T-cell (primary cell): ENCODE measurements at regions of chr9 and their contacts with region 1.

Region 1: GRCh38 chr9:15370466-15371447 is 51.9 kb upstream of the SNAPC3 start:
- DNase-seq: no peak
- ATAC-seq: no peak
- H3K4me3 ChIP-seq: no peak overlapping the region
- H3K4me3 Mint-ChIP-seq: no peak overlapping the region
- H3K27ac ChIP-seq: no peak overlapping the region
- H3K27ac Mint-ChIP-seq: no peak overlapping the region
- H3K4me1 ChIP-seq: no peaks in the 10 kb centered on the region
- H3K4me1 Mint-ChIP-seq: no peaks in the 10 kb centered on the region
- H3K27me3 ChIP-seq: peaks cover 0 to 12% of the 10 kb centered on the region in 2 experiments
- H3K27me3 Mint-ChIP-seq: peaks cover 0 to 6% of the 10 kb centered on the region in 2 donors

Region 2: DNA sequence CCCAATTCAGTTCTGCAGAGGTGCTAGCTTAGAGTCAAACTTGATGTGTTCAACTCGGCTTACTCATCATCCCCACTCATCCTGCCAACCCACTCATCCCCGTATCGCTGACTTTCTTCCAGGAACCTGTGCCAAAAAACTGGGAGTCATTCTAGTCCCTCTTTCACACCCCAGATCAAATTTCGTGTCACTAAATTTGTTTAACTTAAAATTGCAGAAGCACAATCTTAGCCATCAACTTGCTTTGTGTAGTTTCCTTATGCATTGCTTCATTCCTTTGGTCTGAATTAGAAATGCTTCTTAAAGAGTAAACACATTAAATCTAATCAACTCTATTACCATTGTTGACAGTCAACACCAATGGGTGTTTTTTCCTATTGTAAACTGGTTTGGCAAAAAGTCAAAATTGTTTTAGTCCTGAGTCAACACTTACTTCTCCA is 226.1 kb before region 1 on chr9:
- CTCF ChIA-PET with region 1: no interaction called
- POLR2A ChIA-PET with region 1: no interaction called
- DNase-seq: no peak
- ATAC-seq: no peak
- H3K4me3 ChIP-seq: no peak overlapping the region
- H3K4me3 Mint-ChIP-seq: no peak overlapping the region
- H3K27ac ChIP-seq: no peak overlapping the region
- H3K27ac Mint-ChIP-seq: no peak overlapping the region
- H3K4me1 ChIP-seq: no peaks in the 10 kb centered on the region
- H3K4me1 Mint-ChIP-seq: peaks cover 0 to 4% (median 3%) of the 10 kb centered on the region in 3 donors
- H3K27me3 ChIP-seq: no peaks in the 10 kb centered on the region
- H3K27me3 Mint-ChIP-seq: peaks cover 2 to 10% of the 10 kb centered on the region in 2 donors

Region 3: GRCh38 chr9:15422372-15423230 is 51.8 kb after region 1 on chr9 and contains the start of gene SNAPC3:
- CTCF ChIA-PET with region 1: no interaction called
- POLR2A ChIA-PET with region 1: no interaction called
- DNase-seq: peak; percentile 83 to 95 (median 90)
- ATAC-seq: peak; percentile 96 to 99 (median 98)
- H3K4me3 ChIP-seq: peak within 1 kb of the TSS; percentile 84 to 85
- H3K4me3 Mint-ChIP-seq: peak within 1 kb of the TSS; percentile 88 to 93 (median 91)
- H3K27ac ChIP-seq: peak within 1 kb of the TSS; percentile 86
- H3K27ac Mint-ChIP-seq: peak within 1 kb of the TSS; percentile 89 to 91
- H3K4me1 ChIP-seq: peaks cover 11 to 26% of the 10 kb centered on the region in 2 experiments
- H3K4me1 Mint-ChIP-seq: peaks cover 31 to 42% (median 39%) of the 10 kb centered on the region in 3 donors
- H3K27me3 ChIP-seq: no peaks in the 10 kb centered on the region
- H3K27me3 Mint-ChIP-seq: no peaks in the 10 kb centered on the region
- total RNA-seq, gene SNAPC3: 11.3 to 32.4 (median 25.6) TPM

Region 4: GRCh38 chr9:15552636-15553527 is 182.1 kb after region 1 on chr9 and contains the start of gene CCDC171:
- CTCF ChIA-PET with region 1: no interaction called
- POLR2A ChIA-PET with region 1: interaction called in 1 of 2 experiments, 11 read pairs
- DNase-seq: peak; percentile 68 to 95 (median 80)
- ATAC-seq: peak; percentile 88 to 90 (median 90)
- H3K4me3 ChIP-seq: peak within 1 kb of the TSS; percentile 76 to 96
- H3K4me3 Mint-ChIP-seq: peak within 1 kb of the TSS; percentile 91 to 94 (median 93)
- H3K27ac ChIP-seq: peak within 1 kb of the TSS; percentile 36
- H3K27ac Mint-ChIP-seq: peak within 1 kb of the TSS; percentile 76 to 80
- H3K4me1 ChIP-seq: peaks cover 4 to 20% of the 10 kb centered on the region in 2 experiments
- H3K4me1 Mint-ChIP-seq: peaks cover 11 to 23% (median 15%) of the 10 kb centered on the region in 3 donors
- H3K27me3 ChIP-seq: peaks cover 0 to 3% of the 10 kb centered on the region in 2 experiments
- H3K27me3 Mint-ChIP-seq: no peaks in the 10 kb centered on the region
- total RNA-seq, gene CCDC171: 0.79 to 1.7 (median 1.4) TPM